Dendritic cell treated with granulocyte-macrophage colony-stimulating factor and Interleukin-4, amounts not matched to agents 40 ng/mL and 50 ng/mL, for 4 days (primary cell): ENCODE measurements at regions of chr17 and their contacts with region 1.

Region 1: DNA sequence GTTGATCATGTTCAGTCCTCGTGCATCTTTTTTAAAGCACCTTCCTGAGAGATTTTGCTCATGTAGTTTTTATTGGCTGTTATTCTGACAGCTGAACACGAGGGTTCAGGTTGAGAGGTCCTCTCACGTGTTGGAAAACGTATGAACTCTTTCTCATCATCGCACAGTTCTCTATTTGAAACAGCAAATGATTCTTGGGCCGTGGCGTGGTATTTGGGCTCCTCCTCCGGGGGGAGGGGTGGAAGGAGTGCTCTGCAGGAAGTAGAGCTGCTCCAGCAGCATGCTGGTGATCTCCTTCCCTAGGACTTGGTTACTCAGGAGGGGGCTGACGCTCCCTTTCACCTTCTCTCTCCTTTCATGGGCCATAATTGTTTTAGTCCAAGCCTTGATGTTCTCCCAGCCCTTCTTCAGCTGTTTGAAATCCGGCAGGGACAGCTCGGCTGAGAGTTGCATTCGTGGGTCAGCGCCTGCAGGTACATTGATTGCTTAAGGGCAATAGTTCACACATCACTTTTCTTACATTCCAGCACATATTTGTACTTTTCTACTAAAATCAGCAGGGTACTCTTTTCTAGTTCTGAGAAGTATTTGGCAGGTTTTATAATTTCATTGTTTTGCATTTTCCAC is 70.5 kb downstream of the KSR1 start:
- H3K4me3 Mint-ChIP-seq: peak overlapping the region; percentile 57
- H3K27ac Mint-ChIP-seq: peak overlapping the region; percentile 72
- H3K4me1 Mint-ChIP-seq: peaks cover 74% of the 10 kb centered on the region
- H3K27me3 Mint-ChIP-seq: peaks cover 2% of the 10 kb centered on the region

Region 2: GRCh38 chr17:27376637-27377547 is 149.8 kb before region 1 on chr17:
- intact Hi-C with region 1: no loop called
- H3K4me3 Mint-ChIP-seq: no peak overlapping the region
- H3K27ac Mint-ChIP-seq: no peak overlapping the region
- H3K4me1 Mint-ChIP-seq: peaks cover 18% of the 10 kb centered on the region
- H3K27me3 Mint-ChIP-seq: peaks cover 18% of the 10 kb centered on the region

Region 3: DNA sequence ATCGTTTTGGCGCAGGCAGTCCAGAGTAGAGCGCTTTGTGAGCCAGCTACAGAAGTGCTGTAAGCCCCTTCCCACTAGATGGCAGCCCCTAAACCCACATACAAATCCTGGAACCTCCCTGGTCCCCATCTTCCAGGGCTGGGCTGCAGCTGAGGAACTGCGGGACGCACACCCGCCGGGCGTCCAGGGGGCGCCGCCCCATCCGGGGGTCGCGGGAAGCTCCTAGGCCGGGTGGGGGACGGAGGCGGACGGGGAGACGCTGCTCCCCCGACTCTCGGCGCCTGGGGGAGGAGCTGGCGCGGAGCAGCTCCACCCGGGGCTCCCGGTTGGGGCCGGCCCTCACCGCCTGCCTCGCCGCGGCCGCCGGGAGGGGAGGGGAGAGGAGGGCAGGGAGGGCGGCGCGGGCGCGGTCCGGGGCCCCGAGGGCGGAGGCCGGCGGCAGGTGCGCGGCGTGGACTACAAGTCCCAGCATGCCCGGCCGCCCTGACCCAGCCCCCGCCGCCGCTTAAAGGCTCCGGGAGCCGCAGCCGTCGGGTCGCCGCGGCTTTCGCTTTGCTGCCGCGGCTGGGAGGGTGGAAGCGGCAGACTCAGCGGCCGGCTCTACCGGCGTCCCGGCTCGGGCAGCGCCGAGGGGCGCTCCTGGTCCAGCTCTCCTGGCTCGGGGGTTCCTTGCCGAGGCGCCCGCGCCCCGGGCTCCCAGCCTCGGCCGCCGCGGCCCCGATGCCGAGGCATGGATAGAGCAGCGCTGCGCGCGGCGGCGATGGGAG is 70.6 kb before region 1 on chr17 and contains the start of gene KSR1:
- intact Hi-C with region 1: loop called (anchors 5 kb)
- H3K4me3 Mint-ChIP-seq: peak within 1 kb of the TSS; percentile 86
- H3K27ac Mint-ChIP-seq: peak within 1 kb of the TSS; percentile 79
- H3K4me1 Mint-ChIP-seq: peaks cover 25% of the 10 kb centered on the region
- H3K27me3 Mint-ChIP-seq: peaks cover 6% of the 10 kb centered on the region

Region 4: GRCh38 chr17:27488231-27488630 is 38.5 kb before region 1 on chr17:
- intact Hi-C with region 1: loop called (anchors 1 kb)
- H3K4me3 Mint-ChIP-seq: no peak overlapping the region
- H3K27ac Mint-ChIP-seq: peak overlapping the region; percentile 77
- H3K4me1 Mint-ChIP-seq: peaks cover 85% of the 10 kb centered on the region
- H3K27me3 Mint-ChIP-seq: no peaks in the 10 kb centered on the region

Region 5: GRCh38 chr17:27540318-27541101 is 13.8 kb after region 1 on chr17:
- intact Hi-C with region 1: loop called (anchors 1 kb)
- H3K4me3 Mint-ChIP-seq: peak overlapping the region; percentile 56
- H3K27ac Mint-ChIP-seq: peak overlapping the region; percentile 91
- H3K4me1 Mint-ChIP-seq: peaks cover 69% of the 10 kb centered on the region
- H3K27me3 Mint-ChIP-seq: peaks cover 1% of the 10 kb centered on the region